Activated CD4-positive, alpha-beta T cell treated with anti-CD3 and anti-CD28 coated beads for 36 hours (primary cell): ENCODE measurements at regions of chr1 and their contacts with region 1.

Region 1: GRCh38 chr1:225474986-225475820 is 47.4 kb upstream of the LBR start:
- DNase-seq: peak; percentile 80
- ATAC-seq: peak; percentile 70
- H3K4me3 Mint-ChIP-seq: no peak overlapping the region
- H3K27ac Mint-ChIP-seq: no peak overlapping the region
- H3K4me1 Mint-ChIP-seq: peaks cover 41% of the 10 kb centered on the region
- H3K27me3 Mint-ChIP-seq: no peaks in the 10 kb centered on the region

Region 2: DNA sequence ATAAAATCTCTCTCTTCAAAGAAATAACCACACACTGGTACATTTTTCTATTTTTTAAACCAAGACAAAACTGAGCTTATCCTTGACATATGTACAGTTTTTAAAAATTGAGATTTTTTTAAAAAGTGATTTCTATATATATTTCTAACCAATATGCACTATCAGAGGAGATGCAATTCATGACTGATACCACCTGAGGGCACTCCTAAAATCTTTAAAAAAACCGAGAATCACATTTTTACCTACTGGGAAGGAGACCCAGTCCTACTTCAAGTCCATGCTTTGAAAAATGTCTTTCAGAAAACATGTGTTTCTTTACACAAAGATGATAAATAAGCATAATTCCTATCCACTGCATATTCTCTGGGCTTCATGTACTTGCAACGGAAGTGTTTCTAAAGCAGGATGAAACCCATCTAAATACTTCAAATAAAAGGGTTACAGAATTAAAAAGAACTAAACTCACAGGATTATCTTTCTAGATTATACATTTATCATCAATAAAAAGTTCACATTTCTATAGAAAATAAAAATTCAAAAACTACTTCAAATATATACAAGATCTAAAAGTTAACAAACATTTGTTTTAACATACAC is 79.1 kb after region 1 on chr1:
- CTCF ChIA-PET with region 1: interaction called, 3 read pairs
- POLR2A ChIA-PET with region 1: no interaction called
- intact Hi-C with region 1: loop called in 1 of 2 experiments (anchors 1 kb)
- DNase-seq: no peak
- ATAC-seq: no peak
- H3K4me3 Mint-ChIP-seq: no peak overlapping the region
- H3K27ac Mint-ChIP-seq: no peak overlapping the region
- H3K4me1 Mint-ChIP-seq: no peaks in the 10 kb centered on the region
- H3K27me3 Mint-ChIP-seq: no peaks in the 10 kb centered on the region

Region 3: GRCh38 chr1:225700164-225700740 is 225.0 kb after region 1 on chr1:
- CTCF ChIA-PET with region 1: no interaction called
- POLR2A ChIA-PET with region 1: no interaction called
- intact Hi-C with region 1: no loop called
- DNase-seq: no peak
- ATAC-seq: no peak
- H3K4me3 Mint-ChIP-seq: no peak overlapping the region
- H3K27ac Mint-ChIP-seq: no peak overlapping the region
- H3K4me1 Mint-ChIP-seq: no peaks in the 10 kb centered on the region
- H3K27me3 Mint-ChIP-seq: no peaks in the 10 kb centered on the region

Region 4: GRCh38 chr1:225772323-225772768 is 297.1 kb after region 1 on chr1:
- CTCF ChIA-PET with region 1: interaction called, 15 read pairs
- POLR2A ChIA-PET with region 1: no interaction called
- intact Hi-C with region 1: loop called (anchors 1 to 2 kb)
- DNase-seq: peak; percentile 66
- ATAC-seq: peak; percentile 50
- H3K4me3 Mint-ChIP-seq: no peak overlapping the region
- H3K27ac Mint-ChIP-seq: no peak overlapping the region
- H3K4me1 Mint-ChIP-seq: peaks cover 2% of the 10 kb centered on the region
- H3K27me3 Mint-ChIP-seq: no peaks in the 10 kb centered on the region

Region 5: GRCh38 chr1:225911191-225912130 is 436.3 kb after region 1 on chr1:
- CTCF ChIA-PET with region 1: interaction called, 11 read pairs
- POLR2A ChIA-PET with region 1: no interaction called
- intact Hi-C with region 1: loop called (anchors 1 to 2 kb)
- DNase-seq: peak; percentile 85
- ATAC-seq: peak; percentile 92
- H3K4me3 Mint-ChIP-seq: no peak overlapping the region
- H3K27ac Mint-ChIP-seq: no peak overlapping the region
- H3K4me1 Mint-ChIP-seq: peaks cover 18% of the 10 kb centered on the region
- H3K27me3 Mint-ChIP-seq: no peaks in the 10 kb centered on the region

Region 6: GRCh38 chr1:225987491-225988316 is 512.5 kb after region 1 on chr1:
- CTCF ChIA-PET with region 1: interaction called, 13 read pairs
- POLR2A ChIA-PET with region 1: no interaction called
- intact Hi-C with region 1: no loop called
- DNase-seq: no peak
- ATAC-seq: no peak
- H3K4me3 Mint-ChIP-seq: no peak overlapping the region
- H3K27ac Mint-ChIP-seq: no peak overlapping the region
- H3K4me1 Mint-ChIP-seq: peaks cover 20% of the 10 kb centered on the region
- H3K27me3 Mint-ChIP-seq: no peaks in the 10 kb centered on the region